ENCODE measurements at regions of chr1 and their contacts with region 1.

Region 1: GRCh38 chr1:210328746-210329503 is at the start of gene HHAT:
- DNase-seq: peak; percentile 73
- ATAC-seq: peak; percentile 80
- H3K4me3 Mint-ChIP-seq: peak within 1 kb of the TSS; percentile 97
- H3K27ac Mint-ChIP-seq: peak within 1 kb of the TSS; percentile 96
- H3K4me1 Mint-ChIP-seq: peaks cover 43% of the 10 kb centered on the region
- H3K27me3 Mint-ChIP-seq: peaks cover 6% of the 10 kb centered on the region
- CTCF ChIP-seq: no peak
- total RNA-seq, gene HHAT: 6.1 and 8.5 TPM in 2 replicates

Region 2: GRCh38 chr1:210360852-210361477 is 32.0 kb after region 1 on chr1:
- CTCF ChIA-PET with region 1: interaction called, 10 read pairs
- POLR2A ChIA-PET with region 1: interaction called, 3 read pairs
- intact Hi-C with region 1: loop called (anchors 1 kb)
- DNase-seq: no peak
- ATAC-seq: peak; percentile 62
- H3K4me3 Mint-ChIP-seq: no peak overlapping the region
- H3K27ac Mint-ChIP-seq: no peak overlapping the region
- H3K4me1 Mint-ChIP-seq: no peaks in the 10 kb centered on the region
- H3K27me3 Mint-ChIP-seq: no peaks in the 10 kb centered on the region
- CTCF ChIP-seq: no peak

Region 3: DNA sequence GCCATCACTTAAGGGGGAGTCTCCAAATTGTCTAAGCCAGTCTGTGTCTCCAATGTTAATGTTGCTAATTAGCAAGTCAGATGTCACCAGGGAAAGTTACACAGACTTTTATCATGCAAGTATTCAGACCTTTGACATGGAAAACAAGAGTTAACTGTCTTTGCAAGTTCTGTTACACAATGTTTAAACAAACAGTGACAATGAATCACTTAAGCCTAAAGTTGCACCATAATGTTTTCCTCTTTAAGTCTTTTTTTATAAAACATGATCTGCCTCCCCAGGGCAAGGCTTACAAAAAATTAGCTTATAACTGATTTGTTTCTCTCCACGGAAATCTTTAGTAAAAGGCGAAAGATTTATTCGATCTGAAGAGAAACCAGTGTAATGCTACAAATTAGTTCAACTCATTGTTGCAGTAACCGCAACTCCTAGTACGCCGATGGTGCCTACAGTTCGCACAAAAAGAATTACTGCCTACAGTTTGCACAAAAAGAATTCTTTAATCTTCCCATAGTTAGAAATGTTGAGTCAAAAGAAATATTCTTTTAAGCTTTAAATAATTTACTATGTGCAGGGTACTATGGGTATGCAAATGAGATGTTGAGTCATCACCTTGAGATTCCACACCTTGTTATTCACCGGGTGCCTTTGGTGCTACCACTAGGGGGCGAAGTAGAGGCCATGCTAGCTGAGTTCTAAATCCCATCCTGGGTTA is 45.1 kb after region 1 on chr1:
- CTCF ChIA-PET with region 1: no interaction called
- POLR2A ChIA-PET with region 1: interaction called, 13 read pairs
- intact Hi-C with region 1: no loop called
- DNase-seq: no peak
- ATAC-seq: peak; percentile 70
- H3K4me3 Mint-ChIP-seq: no peak overlapping the region
- H3K27ac Mint-ChIP-seq: peak overlapping the region; percentile 22
- H3K4me1 Mint-ChIP-seq: peaks cover 5% of the 10 kb centered on the region
- H3K27me3 Mint-ChIP-seq: no peaks in the 10 kb centered on the region
- CTCF ChIP-seq: no peak

Region 4: GRCh38 chr1:210412240-210412639 is 83.3 kb after region 1 on chr1:
- CTCF ChIA-PET with region 1: no interaction called
- POLR2A ChIA-PET with region 1: no interaction called
- intact Hi-C with region 1: no loop called
- DNase-seq: no peak
- ATAC-seq: no peak
- H3K4me3 Mint-ChIP-seq: no peak overlapping the region
- H3K27ac Mint-ChIP-seq: no peak overlapping the region
- H3K4me1 Mint-ChIP-seq: peaks cover 3% of the 10 kb centered on the region
- H3K27me3 Mint-ChIP-seq: no peaks in the 10 kb centered on the region
- CTCF ChIP-seq: no peak

Region 5: GRCh38 chr1:210477381-210477783 is 148.5 kb after region 1 on chr1:
- CTCF ChIA-PET with region 1: no interaction called
- POLR2A ChIA-PET with region 1: no interaction called
- intact Hi-C with region 1: no loop called
- DNase-seq: no peak
- ATAC-seq: no peak
- H3K4me3 Mint-ChIP-seq: no peak overlapping the region
- H3K27ac Mint-ChIP-seq: no peak overlapping the region
- H3K4me1 Mint-ChIP-seq: no peaks in the 10 kb centered on the region
- H3K27me3 Mint-ChIP-seq: no peaks in the 10 kb centered on the region
- CTCF ChIP-seq: no peak

Region 6: GRCh38 chr1:210496063-210496462 is 167.1 kb after region 1 on chr1:
- CTCF ChIA-PET with region 1: no interaction called
- POLR2A ChIA-PET with region 1: no interaction called
- intact Hi-C with region 1: no loop called
- DNase-seq: no peak
- ATAC-seq: no peak
- H3K4me3 Mint-ChIP-seq: no peak overlapping the region
- H3K27ac Mint-ChIP-seq: no peak overlapping the region
- H3K4me1 Mint-ChIP-seq: no peaks in the 10 kb centered on the region
- H3K27me3 Mint-ChIP-seq: no peaks in the 10 kb centered on the region
- CTCF ChIP-seq: no peak

Measured in activated B cell treated with CpG ODN at 0.5 μM for 24 hours (primary cell).